Activated CD4-positive, alpha-beta memory T cell treated with anti-CD3 and anti-CD28 coated beads for 36 hours (primary cell): ENCODE measurements at regions of chr13 and their contacts with region 1.

Region 1: GRCh38 chr13:94115054-94115453 is 364.4 kb downstream of the DCT start:
- DNase-seq: no peak
- H3K4me3 Mint-ChIP-seq: no peak overlapping the region
- H3K27ac Mint-ChIP-seq: no peak overlapping the region
- H3K4me1 Mint-ChIP-seq: no peaks in the 10 kb centered on the region
- H3K27me3 Mint-ChIP-seq: peaks cover 2% of the 10 kb centered on the region

Region 2: GRCh38 chr13:94362411-94362909 is 247.4 kb after region 1 on chr13:
- CTCF ChIA-PET with region 1: interaction called, 12 read pairs
- POLR2A ChIA-PET with region 1: no interaction called
- intact Hi-C with region 1: no loop called
- DNase-seq: peak; percentile 73
- H3K4me3 Mint-ChIP-seq: no peak overlapping the region
- H3K27ac Mint-ChIP-seq: no peak overlapping the region
- H3K4me1 Mint-ChIP-seq: peaks cover 6% of the 10 kb centered on the region
- H3K27me3 Mint-ChIP-seq: peaks cover 8% of the 10 kb centered on the region

Region 3: DNA sequence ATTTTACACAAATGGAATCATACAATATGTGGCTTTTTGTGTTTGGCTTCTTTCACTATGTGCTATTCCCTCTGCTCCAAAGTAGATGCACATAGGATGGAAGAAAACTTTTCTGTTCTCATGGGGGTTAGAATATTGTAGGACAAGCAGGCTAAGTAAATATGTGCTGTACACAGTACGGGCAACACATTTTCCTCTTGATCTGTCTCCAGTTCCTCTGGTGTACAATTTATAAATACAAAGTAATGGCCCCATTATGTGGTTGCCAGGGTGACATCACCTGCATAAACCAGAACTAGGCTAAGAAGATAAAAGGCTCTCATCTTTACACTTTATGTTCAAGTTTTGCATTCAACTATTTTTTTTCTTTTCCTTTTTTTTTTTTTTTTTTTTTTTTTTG is 638.3 kb after region 1 on chr13:
- CTCF ChIA-PET with region 1: no interaction called
- POLR2A ChIA-PET with region 1: no interaction called
- intact Hi-C with region 1: no loop called
- DNase-seq: no peak
- H3K4me3 Mint-ChIP-seq: no peak overlapping the region
- H3K27ac Mint-ChIP-seq: no peak overlapping the region
- H3K4me1 Mint-ChIP-seq: no peaks in the 10 kb centered on the region
- H3K27me3 Mint-ChIP-seq: peaks cover 12% of the 10 kb centered on the region